Activated T-helper 1 cell treated with anti-CD3 and anti-CD28 coated beads, Interleukin-12 subunit alpha, Interleukin-12 subunit beta, Interleukin-2, Interleukin-4 antibody, amounts not matched to agents 30 ng/mL and 10 ng/mL and 1 ng/mL, durations not matched to agents 14 hours and 24 hours and 36 hours (primary cell): ENCODE measurements at regions of chr17 and their contacts with region 1.

Region 1: GRCh38 chr17:76072148-76072858 is at the start of gene SRP68:
- DNase-seq: peak; percentile 83
- H3K4me3 Mint-ChIP-seq: peak within 1 kb of the TSS; percentile 97
- H3K27ac Mint-ChIP-seq: peak within 1 kb of the TSS; percentile 98
- H3K4me1 Mint-ChIP-seq: peaks cover 43% of the 10 kb centered on the region
- H3K27me3 Mint-ChIP-seq: peaks cover 27% of the 10 kb centered on the region
- total RNA-seq, gene SRP68: 177 and 184 TPM in 2 replicates

Region 2: GRCh38 chr17:75784473-75785015 is 287.8 kb before region 1 on chr17 and contains the start of gene UNK:
- intact Hi-C with region 1: loop called (anchors 1 kb)
- DNase-seq: peak; percentile 94
- H3K4me3 Mint-ChIP-seq: peak within 1 kb of the TSS; percentile 92
- H3K27ac Mint-ChIP-seq: peak within 1 kb of the TSS; percentile 99
- H3K4me1 Mint-ChIP-seq: peaks cover 47% of the 10 kb centered on the region
- H3K27me3 Mint-ChIP-seq: peaks cover 2% of the 10 kb centered on the region
- total RNA-seq, gene UNK: 26.0 and 26.9 TPM in 2 replicates

Region 3: DNA sequence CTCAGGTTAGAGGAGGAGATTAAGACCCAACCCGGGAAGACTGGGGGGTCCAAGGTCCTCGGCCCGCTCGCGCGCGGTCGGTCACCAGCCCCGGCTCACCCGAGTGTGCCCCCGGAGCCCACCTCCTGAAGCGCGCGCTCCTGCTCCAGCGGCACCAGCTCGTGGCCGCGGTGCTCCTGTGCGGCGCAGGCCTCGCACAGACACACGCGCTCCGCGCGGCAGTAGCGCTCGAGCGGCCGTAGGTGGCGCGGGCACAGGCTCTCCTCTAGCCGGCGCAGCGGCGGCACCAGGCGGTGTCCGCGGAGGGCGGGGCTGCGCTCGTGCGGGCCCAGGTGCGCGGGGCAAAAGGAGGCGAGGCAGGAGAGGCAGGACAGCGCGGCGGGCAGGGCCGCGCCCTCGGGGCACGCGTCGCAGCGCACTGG is 194.5 kb before region 1 on chr17:
- intact Hi-C with region 1: no loop called
- DNase-seq: peak; percentile 71
- H3K4me3 Mint-ChIP-seq: peak overlapping the region; percentile 93
- H3K27ac Mint-ChIP-seq: peak overlapping the region; percentile 95
- H3K4me1 Mint-ChIP-seq: peaks cover 32% of the 10 kb centered on the region
- H3K27me3 Mint-ChIP-seq: peaks cover 16% of the 10 kb centered on the region

Region 4: DNA sequence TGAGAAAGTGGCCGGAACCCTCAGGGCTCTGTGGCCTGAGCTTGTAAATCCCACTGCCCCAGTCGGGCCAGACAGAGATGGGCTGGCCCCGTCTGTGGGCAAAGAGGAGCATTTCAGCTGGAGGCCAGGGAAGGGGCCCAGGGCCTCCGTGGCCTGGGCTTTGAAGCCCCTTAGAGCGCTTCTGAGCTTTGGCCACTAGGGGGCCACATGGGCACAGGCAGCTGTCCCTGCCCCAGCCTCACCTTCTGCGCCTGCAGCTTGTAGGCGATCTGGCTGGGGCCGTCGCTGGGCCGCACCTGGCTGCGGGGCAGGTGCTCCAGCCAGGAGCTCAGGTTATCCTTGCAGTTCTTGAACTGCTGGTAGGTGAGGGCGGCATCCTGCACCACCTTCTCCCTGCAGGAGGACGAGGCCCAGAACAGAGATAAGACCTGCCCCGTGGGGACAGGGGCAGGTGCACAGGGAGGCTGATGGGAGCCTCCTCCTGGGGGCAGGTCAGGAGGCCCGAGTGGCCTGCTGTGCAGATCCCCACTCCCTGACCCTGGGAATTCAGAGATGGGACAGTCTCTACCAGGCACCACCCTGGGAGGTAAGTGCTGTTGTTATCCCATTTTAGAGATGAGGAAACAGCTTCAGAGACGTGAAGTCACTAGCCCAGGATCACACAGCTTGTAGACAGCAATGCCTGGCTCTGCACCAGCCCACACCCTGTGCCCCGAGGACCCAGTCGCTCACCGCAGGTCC is 57.9 kb before region 1 on chr17:
- intact Hi-C with region 1: loop called (anchors 5 kb)
- DNase-seq: peak; percentile 67
- H3K4me3 Mint-ChIP-seq: no peak overlapping the region
- H3K27ac Mint-ChIP-seq: no peak overlapping the region
- H3K4me1 Mint-ChIP-seq: no peaks in the 10 kb centered on the region
- H3K27me3 Mint-ChIP-seq: peaks cover 2% of the 10 kb centered on the region

Region 5: GRCh38 chr17:76036497-76037261 is 35.6 kb before region 1 on chr17:
- intact Hi-C with region 1: no loop called
- DNase-seq: no peak
- H3K4me3 Mint-ChIP-seq: no peak overlapping the region
- H3K27ac Mint-ChIP-seq: no peak overlapping the region
- H3K4me1 Mint-ChIP-seq: peaks cover 8% of the 10 kb centered on the region
- H3K27me3 Mint-ChIP-seq: no peaks in the 10 kb centered on the region

Region 6: DNA sequence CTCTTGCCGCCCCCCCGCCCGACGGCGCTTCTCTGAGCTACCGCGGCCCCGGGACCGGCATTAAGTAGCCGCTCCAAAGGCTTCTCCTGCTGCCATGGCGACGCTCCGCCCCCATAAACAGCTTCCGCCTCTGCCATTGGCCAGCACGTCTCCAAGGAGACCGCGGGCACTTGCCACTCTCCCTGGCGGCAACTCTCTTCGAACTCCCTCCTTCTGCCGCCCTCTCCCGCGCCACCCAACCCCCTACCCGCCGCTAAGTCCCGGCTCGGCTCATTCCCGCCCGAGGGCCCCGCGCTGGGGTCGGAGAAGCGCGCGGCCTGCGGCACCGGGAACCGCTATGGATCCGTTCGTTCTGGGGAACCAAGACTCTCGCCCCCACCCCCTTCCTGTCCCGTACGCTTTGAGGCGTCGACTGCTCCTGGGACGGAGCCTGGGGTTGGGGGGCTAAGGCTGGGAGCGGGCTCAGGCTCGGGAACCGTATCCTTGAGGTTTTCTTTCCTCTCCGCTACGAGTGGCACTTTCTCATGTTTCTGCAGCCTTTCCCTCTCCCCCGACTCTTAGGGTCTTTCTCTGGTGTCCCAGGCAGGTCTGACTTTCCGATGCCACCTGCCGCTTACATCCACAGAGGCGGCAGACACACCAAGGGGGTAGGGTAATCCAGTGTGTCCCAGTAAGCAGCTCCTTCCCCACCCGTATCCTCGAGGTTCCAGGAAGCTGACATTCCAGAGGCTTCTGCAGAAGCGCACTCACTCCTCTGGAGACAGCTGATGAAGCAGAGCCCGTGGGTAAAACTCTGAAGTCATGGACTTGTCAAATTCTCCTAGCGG is 69.1 kb after region 1 on chr17 and contains the start of gene FOXJ1:
- intact Hi-C with region 1: loop called (anchors 1 kb)
- DNase-seq: peak; percentile 91
- H3K4me3 Mint-ChIP-seq: peak within 1 kb of the TSS; percentile 74
- H3K27ac Mint-ChIP-seq: peak within 1 kb of the TSS; percentile 65
- H3K4me1 Mint-ChIP-seq: peaks cover 53% of the 10 kb centered on the region
- H3K27me3 Mint-ChIP-seq: peaks cover 14% of the 10 kb centered on the region
- total RNA-seq, gene FOXJ1: 0.10 TPM in 1 of 2 replicates, not detected in the other

Region 7: DNA sequence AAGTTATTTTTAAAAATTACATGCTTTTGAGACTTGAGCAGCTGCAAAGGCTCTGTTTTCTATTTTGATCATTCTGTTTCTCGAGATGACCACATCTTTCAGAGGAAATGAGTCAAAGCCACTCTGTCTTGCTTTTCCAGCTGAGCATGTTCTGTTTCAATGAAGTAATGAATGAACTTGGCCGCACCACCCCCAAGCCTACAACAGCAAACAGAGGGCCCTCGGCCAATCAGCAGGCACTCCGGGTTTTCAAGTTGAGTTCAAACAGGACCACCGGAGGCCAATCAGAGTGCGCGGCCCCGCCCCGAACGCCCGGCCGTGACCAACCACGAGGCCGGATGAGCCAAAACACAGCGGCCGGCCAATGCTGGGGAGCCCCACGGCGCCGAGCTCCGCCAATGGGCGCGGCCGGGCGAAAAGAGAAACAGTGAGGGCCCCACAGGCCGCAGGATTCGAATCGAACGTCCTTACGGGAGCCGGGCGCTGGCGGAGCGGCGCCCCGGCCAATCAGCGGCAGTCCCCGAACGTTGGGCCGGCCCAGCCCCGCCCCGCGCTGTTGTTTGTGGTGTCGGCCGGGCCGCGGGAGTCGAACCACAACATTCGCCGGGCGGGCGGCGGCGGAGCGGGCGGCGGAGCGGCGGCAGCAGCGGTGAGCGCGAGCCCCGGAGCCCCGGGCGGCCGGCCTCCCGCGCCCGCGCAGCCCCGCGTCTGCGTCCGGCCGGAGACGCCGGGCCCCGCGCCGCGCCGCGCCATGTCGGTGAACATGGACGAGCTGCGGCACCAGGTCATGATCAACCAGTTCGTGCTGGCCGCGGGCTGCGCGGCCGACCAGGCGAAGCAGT is 192.7 kb after region 1 on chr17 and contains the start of gene UBALD2:
- intact Hi-C with region 1: loop called (anchors 1 kb)
- DNase-seq: peak; percentile 99
- H3K4me3 Mint-ChIP-seq: peak within 1 kb of the TSS; percentile 94
- H3K27ac Mint-ChIP-seq: peak within 1 kb of the TSS; percentile 94
- H3K4me1 Mint-ChIP-seq: peaks cover 63% of the 10 kb centered on the region
- H3K27me3 Mint-ChIP-seq: no peaks in the 10 kb centered on the region
- total RNA-seq, gene UBALD2: 206 and 217 TPM in 2 replicates

Region 8: GRCh38 chr17:76384222-76384986 is 312.1 kb after region 1 on chr17 and contains the start of gene SPHK1:
- intact Hi-C with region 1: loop called (anchors 2 kb)
- DNase-seq: peak; percentile 72
- H3K4me3 Mint-ChIP-seq: peak within 1 kb of the TSS; percentile 86
- H3K27ac Mint-ChIP-seq: peak within 1 kb of the TSS; percentile 91
- H3K4me1 Mint-ChIP-seq: peaks cover 5% of the 10 kb centered on the region
- H3K27me3 Mint-ChIP-seq: peaks cover 6% of the 10 kb centered on the region
- total RNA-seq, gene SPHK1: 16.5 and 17.8 TPM in 2 replicates